ENCODE measurements at regions of chr4 and their contacts with region 1.

Region 1: DNA sequence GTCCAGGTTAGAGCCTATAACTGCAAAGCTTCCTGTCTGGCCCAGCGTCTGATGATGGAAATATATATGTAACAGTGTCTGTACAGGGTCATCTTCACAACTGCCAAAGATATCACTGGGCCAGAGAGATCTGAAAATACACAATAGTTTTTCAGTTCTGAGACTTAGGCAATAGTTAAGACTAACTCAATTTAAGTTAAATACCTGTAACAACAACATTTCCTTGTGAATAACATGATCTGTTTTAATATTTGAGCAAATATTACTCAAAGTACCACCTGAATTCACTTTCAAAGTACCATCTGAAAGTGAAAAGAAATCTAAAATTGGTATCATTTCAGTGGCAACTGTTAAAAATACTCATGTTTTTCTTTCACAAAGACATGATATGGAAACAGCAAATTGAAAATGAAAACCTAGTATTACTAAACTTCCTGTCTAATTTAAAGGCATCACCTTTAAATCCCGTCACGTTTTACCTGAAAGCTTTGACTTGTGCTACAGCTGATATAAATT is 9.6 kb downstream of the ZAR1 start:
- DNase-seq: no peak
- H3K4me3 Mint-ChIP-seq: no peak overlapping the region
- H3K27ac Mint-ChIP-seq: peak overlapping the region; percentile 18
- H3K4me1 Mint-ChIP-seq: peaks cover 15% of the 10 kb centered on the region
- H3K27me3 Mint-ChIP-seq: no peaks in the 10 kb centered on the region

Region 2: DNA sequence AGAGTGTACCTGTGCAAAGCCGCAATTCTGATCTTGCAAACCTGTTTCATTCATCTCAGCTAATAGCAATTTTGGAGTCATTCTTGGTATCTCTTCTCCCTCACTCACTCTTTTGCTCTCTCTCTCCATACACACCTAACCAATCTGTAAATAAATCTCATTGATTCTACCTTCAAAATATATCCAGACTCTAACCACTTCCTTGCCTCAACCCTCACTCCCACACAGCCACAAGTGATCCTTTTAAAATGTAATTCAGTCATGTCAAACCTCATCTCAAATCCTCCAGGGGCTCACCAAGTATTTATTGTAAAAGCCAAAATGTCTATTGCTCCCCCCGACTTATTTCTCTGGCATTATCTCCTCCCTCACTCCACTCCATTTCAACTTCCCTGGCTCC is 68.2 kb before region 1 on chr4:
- intact Hi-C with region 1: loop called (anchors 5 kb)
- DNase-seq: no peak
- H3K4me3 Mint-ChIP-seq: no peak overlapping the region
- H3K27ac Mint-ChIP-seq: peak overlapping the region; percentile 53
- H3K4me1 Mint-ChIP-seq: peaks cover 49% of the 10 kb centered on the region
- H3K27me3 Mint-ChIP-seq: no peaks in the 10 kb centered on the region

Region 3: DNA sequence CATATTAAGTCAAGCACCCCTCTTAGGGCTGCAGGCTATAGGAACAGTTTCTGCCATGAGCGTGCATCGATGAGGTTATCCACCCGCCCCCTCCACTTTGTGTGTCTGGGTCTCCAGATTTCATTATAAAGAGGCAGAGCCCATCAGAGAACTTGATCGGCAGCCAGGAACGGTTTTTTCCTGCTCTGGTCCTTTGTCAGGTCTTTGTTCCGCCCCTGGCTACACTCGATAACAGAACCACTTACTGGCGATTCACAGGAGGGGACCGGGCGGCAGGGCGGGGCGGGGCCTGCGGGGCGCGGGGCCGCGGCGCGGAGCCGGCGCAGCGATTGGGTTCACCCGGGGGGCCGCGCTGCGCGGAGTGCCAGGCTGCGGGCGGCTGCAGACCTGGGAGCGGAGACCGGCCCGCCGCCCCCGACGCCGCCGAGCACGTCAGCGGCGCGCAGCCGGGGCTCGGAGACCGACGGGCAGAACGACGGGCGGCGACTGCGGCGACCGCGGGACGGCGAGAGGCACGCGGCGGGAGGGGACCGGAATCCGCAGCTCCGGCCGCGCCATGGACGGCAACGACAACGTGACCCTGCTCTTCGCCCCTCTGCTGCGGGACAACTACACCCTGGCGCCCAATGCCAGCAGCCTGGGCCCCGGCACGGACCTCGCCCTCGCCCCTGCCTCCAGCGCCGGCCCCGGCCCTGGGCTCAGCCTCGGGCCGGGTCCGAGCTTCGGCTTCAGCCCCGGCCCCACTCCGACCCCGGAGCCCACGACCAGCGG is 16.4 kb before region 1 on chr4 and contains the start of gene SLC10A4:
- intact Hi-C with region 1: no loop called
- DNase-seq: no peak
- H3K4me3 Mint-ChIP-seq: peak within 1 kb of the TSS; percentile 55
- H3K27ac Mint-ChIP-seq: no peak within 1 kb of the TSS
- H3K4me1 Mint-ChIP-seq: peaks cover 20% of the 10 kb centered on the region
- H3K27me3 Mint-ChIP-seq: peaks cover 69% of the 10 kb centered on the region
- total RNA-seq, gene SLC10A4: 0.10 TPM in 1 of 2 replicates, not detected in the other

Measured in activated T-helper 1 cell treated with anti-CD3 and anti-CD28 coated beads, Interleukin-12 subunit alpha, Interleukin-12 subunit beta, Interleukin-2, Interleukin-4 antibody, amounts not matched to agents 30 ng/mL and 10 ng/mL and 1 ng/mL, durations not matched to agents 14 hours and 24 hours and 36 hours (primary cell).